ENCODE measurements at regions of chr17 and their contacts with region 1.

Region 1: DNA sequence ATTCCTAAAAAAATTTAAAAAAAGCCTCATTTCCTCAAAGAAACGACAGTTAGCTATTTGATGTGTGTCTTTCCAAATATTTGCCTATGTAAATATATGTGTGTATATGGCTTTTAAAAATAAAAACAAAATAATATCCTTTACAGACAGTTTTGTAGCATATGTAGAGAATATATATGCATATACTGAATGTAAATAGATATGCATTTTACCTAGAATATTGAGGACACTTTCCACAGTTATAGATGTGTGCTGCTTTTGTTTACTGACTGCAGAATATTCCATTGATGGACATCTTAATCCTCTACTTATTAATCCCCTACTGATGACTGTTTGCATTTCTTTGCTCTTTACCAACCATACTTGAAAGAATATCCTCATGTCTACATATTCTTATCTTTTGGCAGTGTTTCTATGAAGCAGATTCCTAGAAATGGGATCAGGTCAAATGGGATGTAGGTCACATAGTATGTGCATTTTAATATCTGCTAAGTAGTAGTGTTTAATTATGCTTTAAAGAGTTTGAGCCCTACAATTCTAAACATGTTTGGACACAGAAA is 3.3 kb downstream of the CCL3L1 start:
- DNase-seq: no peak
- ATAC-seq: no peak
- H3K4me3 ChIP-seq: no peak overlapping the region
- H3K27ac ChIP-seq: no peak overlapping the region
- H3K4me1 ChIP-seq: peaks cover 14% of the 10 kb centered on the region
- H3K27me3 ChIP-seq: peaks cover 6 to 24% of the 10 kb centered on the region in 2 experiments; a peak in 3 of 5 replicates
- CTCF ChIP-seq: no peak
- EP300 ChIP-seq: no peak
- POLR2A ChIP-seq: no peak
- RAD21 ChIP-seq: no peak

Region 2: DNA sequence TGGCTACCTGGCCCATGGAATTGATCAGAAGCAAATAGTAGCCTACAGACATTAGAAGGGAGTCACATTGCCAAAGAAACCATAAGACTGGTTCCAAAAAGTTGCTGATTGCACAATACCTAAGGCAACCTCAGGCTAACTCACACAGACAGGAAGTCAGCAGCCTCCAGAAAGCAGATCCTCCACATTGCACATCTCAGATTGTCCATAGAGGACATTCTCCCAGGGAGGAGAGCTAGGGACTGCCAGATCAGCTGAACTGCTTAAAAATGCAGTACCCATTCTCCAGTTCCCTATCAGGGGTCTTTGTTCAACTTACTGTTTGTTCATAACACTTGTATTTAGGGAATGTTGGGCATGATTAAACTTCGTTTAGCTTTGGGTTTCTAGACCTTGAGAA is 107.5 kb before region 1 on chr17:
- CTCF ChIA-PET with region 1: no interaction called
- POLR2A ChIA-PET with region 1: no interaction called
- in situ Hi-C with region 1: loop called (anchors 5 kb)
- intact Hi-C with region 1: no loop called
- DNase-seq: no peak
- ATAC-seq: no peak
- H3K4me3 ChIP-seq: no peak overlapping the region
- H3K27ac ChIP-seq: no peak overlapping the region
- H3K4me1 ChIP-seq: peaks cover 6% of the 10 kb centered on the region; the same call in 1 of the 2 replicates
- H3K27me3 ChIP-seq: no peaks in the 10 kb centered on the region
- CTCF ChIP-seq: no peak
- EP300 ChIP-seq: no peak
- POLR2A ChIP-seq: no peak
- RAD21 ChIP-seq: no peak

Measured in HepG2 (cell line).